BJ (cell line): ENCODE measurements at regions of chr2 and their contacts with region 1.

Region 1: DNA sequence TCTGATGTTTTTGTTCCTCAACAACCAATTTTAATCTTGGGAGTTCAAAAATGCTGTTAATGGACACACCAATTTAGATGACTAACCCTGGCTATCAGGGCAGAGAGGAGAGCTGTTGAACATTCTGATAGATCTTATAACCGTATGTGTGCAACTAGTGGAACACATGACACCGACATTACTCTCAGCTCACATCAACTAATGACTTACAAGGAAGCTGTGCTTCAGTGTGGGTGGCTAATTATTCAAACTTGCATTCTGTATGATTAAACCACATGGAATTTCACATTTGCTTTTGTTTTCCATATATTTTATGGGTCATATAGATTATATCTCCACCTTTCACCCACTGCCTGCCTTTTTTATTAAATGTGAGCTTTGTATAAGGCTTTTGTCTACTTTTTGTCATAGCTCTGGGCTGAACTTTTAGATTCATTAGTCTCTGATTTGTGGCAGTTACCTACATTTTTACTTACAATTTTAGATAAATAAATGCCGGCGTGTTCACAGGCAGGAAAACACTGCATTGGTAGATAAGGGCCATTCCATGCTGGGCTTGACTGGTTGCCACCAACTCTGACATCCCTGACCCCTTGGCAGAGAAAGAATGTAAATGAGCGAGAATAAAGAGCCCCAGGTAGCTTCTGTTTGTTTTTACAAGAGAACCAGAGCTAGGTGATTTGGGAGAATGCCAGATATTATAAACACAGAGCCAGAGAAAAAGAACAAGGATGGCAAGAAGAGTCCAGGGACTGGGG is 35.6 kb downstream of the LYPD6 start:
- DNase-seq: no peak
- H3K4me3 ChIP-seq: no peak overlapping the region
- H3K27me3 ChIP-seq: no peaks in the 10 kb centered on the region
- CTCF ChIP-seq: no peak

Region 2: DNA sequence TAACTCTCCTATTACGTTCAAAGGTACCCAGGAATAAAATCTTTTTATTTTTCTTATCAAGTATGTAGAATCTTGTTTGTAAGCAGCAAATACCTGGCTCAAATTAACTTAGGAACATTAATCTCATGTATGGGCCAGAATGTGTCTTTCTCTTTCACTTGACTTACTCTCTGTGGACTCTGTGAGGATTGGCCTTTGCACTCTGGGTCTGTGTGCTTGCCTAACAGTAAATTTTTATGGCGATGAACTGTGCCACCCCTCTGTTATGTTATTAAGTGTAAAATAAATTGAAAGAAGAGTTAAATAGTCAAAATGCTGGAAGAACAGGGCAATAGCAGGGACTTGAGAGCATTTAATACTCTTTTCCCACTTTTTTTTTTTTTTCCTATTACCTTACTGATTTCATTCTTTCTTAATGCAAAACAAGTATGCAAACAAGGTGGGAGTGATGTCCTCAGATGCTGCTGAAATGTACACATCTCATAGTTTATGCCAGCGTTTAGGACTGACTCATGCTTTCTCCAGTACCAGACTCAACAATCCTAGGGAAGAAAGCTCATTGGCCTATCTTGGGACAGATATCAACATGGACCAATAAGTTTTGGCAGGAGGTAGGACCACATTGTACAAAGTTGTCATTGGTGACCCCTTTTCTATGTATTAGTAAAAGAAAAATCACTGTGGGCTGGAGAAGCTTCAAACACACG is 10.1 kb before region 1 on chr2:
- CTCF ChIA-PET with region 1: interaction called, 10 read pairs
- POLR2A ChIA-PET with region 1: no interaction called
- DNase-seq: no peak
- H3K4me3 ChIP-seq: no peak overlapping the region
- H3K27me3 ChIP-seq: no peaks in the 10 kb centered on the region
- CTCF ChIP-seq: no peak